GM12878 (cell line): ENCODE measurements at regions of chr14 and their contacts with region 1.

Region 1: GRCh38 chr14:68795597-68796417 is 2.9 kb upstream of the ZFP36L1 start:
- DNase-seq: no peak
- ATAC-seq: peak; percentile 62
- H3K4me3 ChIP-seq: peak overlapping the region; percentile 97
- H3K27ac ChIP-seq: peak overlapping the region; percentile 100
- H3K4me1 ChIP-seq: peaks cover 18% of the 10 kb centered on the region
- H3K27me3 ChIP-seq: no peaks in the 10 kb centered on the region
- CTCF ChIP-seq: peak; percentile 46 to 74 (median 59); a peak in 5 of 6 replicates
- EP300 ChIP-seq: peak in 1 of 2 experiments; percentile 62; a peak in 3 of 4 replicates
- POLR2A ChIP-seq: peak; percentile 97
- RAD21 ChIP-seq: peak; percentile 43; the same call in 1 of the 2 replicates

Region 2: DNA sequence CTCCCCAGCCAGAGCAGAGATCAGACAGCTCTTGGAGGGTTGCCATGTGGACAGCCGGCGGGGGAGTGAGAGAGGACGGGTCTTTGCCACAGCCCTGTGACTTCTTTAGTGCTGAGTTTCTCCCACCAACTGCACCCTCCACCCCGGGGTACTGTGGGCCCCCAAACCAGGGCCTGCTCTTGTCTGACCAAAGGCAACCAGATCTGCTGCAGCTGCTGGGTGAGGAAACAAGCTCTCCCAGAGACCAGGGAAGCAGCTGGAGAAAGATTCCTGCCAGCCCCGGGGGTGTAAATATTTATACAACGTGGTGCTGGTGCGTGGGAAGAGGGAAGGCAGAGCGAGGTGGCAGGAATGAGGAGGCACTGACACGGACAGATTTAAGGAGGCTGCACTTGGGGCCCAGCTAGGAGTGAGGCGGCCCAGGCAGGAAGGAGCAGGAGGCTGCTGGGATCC is 11.4 kb after region 1 on chr14:
- CTCF ChIA-PET with region 1: interaction called, 254 read pairs
- POLR2A ChIA-PET with region 1: interaction called, 17 read pairs
- RAD21 ChIA-PET with region 1: interaction called, 244 read pairs
- SMC1A ChIA-PET with region 1: interaction called, 200 read pairs
- in situ Hi-C with region 1: no loop called
- intact Hi-C with region 1: no loop called
- DNase-seq: no peak
- ATAC-seq: peak; percentile 9; the same call in 2 of the 3 replicates
- H3K4me3 ChIP-seq: no peak overlapping the region
- H3K27ac ChIP-seq: peak overlapping the region; percentile 42; the same call in 1 of the 2 replicates
- H3K4me1 ChIP-seq: peaks cover 17% of the 10 kb centered on the region
- H3K27me3 ChIP-seq: no peaks in the 10 kb centered on the region
- CTCF ChIP-seq: no peak
- EP300 ChIP-seq: no peak
- POLR2A ChIP-seq: no peak
- RAD21 ChIP-seq: no peak

Region 3: GRCh38 chr14:68824517-68825347 is 28.9 kb after region 1 on chr14:
- CTCF ChIA-PET with region 1: interaction called, 254 read pairs
- POLR2A ChIA-PET with region 1: interaction called, 115 read pairs
- RAD21 ChIA-PET with region 1: interaction called, 244 read pairs
- SMC1A ChIA-PET with region 1: interaction called, 200 read pairs
- in situ Hi-C with region 1: no loop called
- intact Hi-C with region 1: no loop called
- DNase-seq: no peak
- ATAC-seq: peak; percentile 10; the same call in 1 of the 3 replicates
- H3K4me3 ChIP-seq: no peak overlapping the region
- H3K27ac ChIP-seq: no peak overlapping the region; the same call in 1 of the 2 replicates
- H3K4me1 ChIP-seq: peaks cover 50% of the 10 kb centered on the region
- H3K27me3 ChIP-seq: no peaks in the 10 kb centered on the region
- CTCF ChIP-seq: peak; percentile 90 to 93 (median 90)
- EP300 ChIP-seq: no peak
- POLR2A ChIP-seq: no peak
- RAD21 ChIP-seq: peak; percentile 64; the same call in 1 of the 2 replicates

Region 4: DNA sequence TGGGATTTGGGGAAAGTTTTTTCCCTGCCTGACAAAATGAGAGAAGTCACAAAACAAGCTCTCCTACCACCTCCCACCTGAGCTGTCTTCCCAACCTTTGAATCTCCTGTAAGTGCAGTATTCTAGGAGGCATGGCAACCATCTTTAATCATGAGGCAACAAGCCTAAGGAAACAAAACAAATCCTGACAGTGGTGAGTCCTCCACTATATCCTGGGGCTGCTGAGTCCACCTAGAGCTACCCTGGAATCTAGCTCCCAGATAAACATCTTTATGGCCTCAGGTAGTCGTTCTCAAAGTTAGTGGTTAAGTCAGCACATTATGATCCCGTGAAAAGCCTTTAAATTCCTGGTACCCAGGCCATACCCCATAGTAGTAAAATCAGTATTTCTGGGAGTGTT is 205.6 kb after region 1 on chr14:
- CTCF ChIA-PET with region 1: no interaction called
- POLR2A ChIA-PET with region 1: no interaction called
- RAD21 ChIA-PET with region 1: no interaction called
- SMC1A ChIA-PET with region 1: no interaction called
- in situ Hi-C with region 1: no loop called
- intact Hi-C with region 1: no loop called
- DNase-seq: no peak
- ATAC-seq: no peak
- H3K4me3 ChIP-seq: no peak overlapping the region
- H3K27ac ChIP-seq: no peak overlapping the region
- H3K4me1 ChIP-seq: no peaks in the 10 kb centered on the region
- H3K27me3 ChIP-seq: no peaks in the 10 kb centered on the region; a peak in 2 of 4 replicates
- CTCF ChIP-seq: no peak
- EP300 ChIP-seq: no peak
- POLR2A ChIP-seq: no peak
- RAD21 ChIP-seq: no peak

Region 5: GRCh38 chr14:69027242-69027913 is 231.6 kb after region 1 on chr14:
- CTCF ChIA-PET with region 1: no interaction called
- POLR2A ChIA-PET with region 1: no interaction called
- RAD21 ChIA-PET with region 1: no interaction called
- SMC1A ChIA-PET with region 1: no interaction called
- in situ Hi-C with region 1: no loop called
- intact Hi-C with region 1: no loop called
- DNase-seq: no peak
- ATAC-seq: no peak
- H3K4me3 ChIP-seq: no peak overlapping the region
- H3K27ac ChIP-seq: no peak overlapping the region
- H3K4me1 ChIP-seq: no peaks in the 10 kb centered on the region
- H3K27me3 ChIP-seq: no peaks in the 10 kb centered on the region; a peak in 1 of 4 replicates
- CTCF ChIP-seq: no peak
- EP300 ChIP-seq: no peak
- POLR2A ChIP-seq: no peak
- RAD21 ChIP-seq: no peak